ENCODE measurements at regions of chr5 and their contacts with region 1.

Region 1: GRCh38 chr5:43389679-43390329 is 22.4 kb downstream of the CCL28 start:
- DNase-seq: peak; percentile 81
- H3K4me3 ChIP-seq: no peak overlapping the region
- H3K27ac ChIP-seq: no peak overlapping the region
- H3K4me1 ChIP-seq: no peaks in the 10 kb centered on the region
- H3K27me3 ChIP-seq: no peaks in the 10 kb centered on the region
- CTCF ChIP-seq: peak; percentile 72 to 73
- POLR2A ChIP-seq: no peak

Region 2: DNA sequence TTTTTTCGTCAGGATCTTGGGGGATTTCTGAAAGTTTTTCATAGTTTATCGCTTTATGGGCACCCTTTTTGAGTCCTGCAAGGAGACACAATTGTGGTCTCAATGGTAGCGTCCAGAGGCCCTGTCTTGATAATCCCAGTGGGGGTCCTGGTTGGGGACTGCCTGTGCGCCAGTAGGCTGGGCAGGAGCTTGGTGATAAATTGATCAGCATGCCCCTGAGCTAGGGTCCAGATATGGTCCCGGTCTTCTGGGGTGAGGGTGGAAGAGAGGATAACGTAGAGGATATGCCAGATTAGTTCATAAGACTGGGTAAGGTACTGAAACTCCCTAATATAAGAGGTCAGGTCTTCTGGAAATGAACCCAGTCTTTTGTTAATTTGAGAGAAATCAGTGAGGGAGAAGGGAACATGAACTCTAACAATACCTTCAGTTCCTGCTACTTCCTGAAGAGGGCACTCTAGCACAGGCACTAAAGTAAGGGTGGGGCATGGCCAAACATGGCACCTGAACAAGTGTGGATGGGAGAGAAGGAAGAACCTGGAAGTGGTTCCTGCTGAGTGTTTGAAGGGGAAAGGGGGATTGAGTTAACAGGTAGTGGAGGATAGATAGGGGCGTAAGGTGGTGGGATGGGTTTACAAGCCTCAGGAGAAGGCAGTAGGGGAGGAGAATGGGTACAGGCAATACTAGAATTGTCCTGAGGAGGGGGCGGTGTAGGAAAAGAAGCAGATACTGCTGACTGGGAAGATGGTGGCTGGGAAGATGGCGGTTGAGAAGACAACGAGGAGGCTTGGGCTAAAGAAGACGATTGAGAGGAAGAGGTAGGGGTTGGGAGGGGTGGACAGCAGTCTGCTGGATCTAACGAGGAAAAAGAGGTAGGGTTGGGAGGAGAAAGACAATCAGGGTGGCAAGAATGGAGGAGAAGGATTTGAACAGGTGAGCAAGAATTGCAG is 315.9 kb before region 1 on chr5:
- CTCF ChIA-PET with region 1: interaction called, 8 read pairs
- POLR2A ChIA-PET with region 1: no interaction called
- dilution Hi-C with region 1: no loop called
- intact Hi-C with region 1: loop called (anchors 1 kb)
- DNase-seq: peak; percentile 34
- H3K4me3 ChIP-seq: no peak overlapping the region
- H3K27ac ChIP-seq: no peak overlapping the region
- H3K4me1 ChIP-seq: peaks cover 13% of the 10 kb centered on the region
- H3K27me3 ChIP-seq: no peaks in the 10 kb centered on the region
- CTCF ChIP-seq: peak; percentile 46 to 54
- POLR2A ChIP-seq: no peak

Region 3: GRCh38 chr5:43227655-43228054 is 162.1 kb before region 1 on chr5:
- CTCF ChIA-PET with region 1: interaction called, 34 read pairs
- POLR2A ChIA-PET with region 1: no interaction called
- dilution Hi-C with region 1: no loop called
- intact Hi-C with region 1: loop called (anchors 1 kb)
- DNase-seq: peak; percentile 44
- H3K4me3 ChIP-seq: no peak overlapping the region
- H3K27ac ChIP-seq: no peak overlapping the region
- H3K4me1 ChIP-seq: no peaks in the 10 kb centered on the region
- H3K27me3 ChIP-seq: peaks cover 2% of the 10 kb centered on the region in 2 experiments
- CTCF ChIP-seq: peak; percentile 28 to 41
- POLR2A ChIP-seq: no peak

Region 4: GRCh38 chr5:43236653-43237355 is 153.0 kb before region 1 on chr5:
- CTCF ChIA-PET with region 1: interaction called, 34 read pairs
- POLR2A ChIA-PET with region 1: no interaction called
- dilution Hi-C with region 1: no loop called
- intact Hi-C with region 1: loop called (anchors 1 kb)
- DNase-seq: no peak
- H3K4me3 ChIP-seq: no peak overlapping the region
- H3K27ac ChIP-seq: no peak overlapping the region
- H3K4me1 ChIP-seq: no peaks in the 10 kb centered on the region
- H3K27me3 ChIP-seq: peaks cover 0 to 2% of the 10 kb centered on the region in 2 experiments
- CTCF ChIP-seq: no peak
- POLR2A ChIP-seq: no peak

Region 5: DNA sequence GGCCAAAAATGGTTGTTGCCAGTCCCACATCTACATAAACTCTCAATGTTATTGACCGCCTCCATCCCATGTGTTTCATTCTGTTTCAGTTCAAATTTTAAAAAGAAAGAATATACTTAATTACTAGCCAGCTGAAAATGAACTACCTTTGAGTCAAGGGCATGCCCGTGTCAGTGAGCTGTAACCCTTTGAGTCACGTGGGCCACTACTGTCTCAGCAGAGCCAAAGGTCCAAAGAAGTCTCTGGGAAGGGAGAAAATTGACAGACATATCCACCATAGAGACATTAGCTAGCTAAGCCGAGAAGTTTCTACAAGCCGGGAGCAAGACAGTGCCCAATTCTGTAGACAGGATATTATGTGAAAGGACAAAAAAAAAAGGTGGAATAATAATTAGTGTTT is 138.1 kb before region 1 on chr5:
- CTCF ChIA-PET with region 1: no interaction called
- POLR2A ChIA-PET with region 1: no interaction called
- dilution Hi-C with region 1: no loop called
- intact Hi-C with region 1: no loop called
- DNase-seq: no peak
- H3K4me3 ChIP-seq: no peak overlapping the region
- H3K27ac ChIP-seq: no peak overlapping the region
- H3K4me1 ChIP-seq: no peaks in the 10 kb centered on the region
- H3K27me3 ChIP-seq: peaks cover 7 to 9% of the 10 kb centered on the region in 2 experiments
- CTCF ChIP-seq: no peak
- POLR2A ChIP-seq: no peak

Region 6: GRCh38 chr5:43305948-43306565 is 83.7 kb before region 1 on chr5:
- CTCF ChIA-PET with region 1: interaction called, 20 read pairs
- POLR2A ChIA-PET with region 1: no interaction called
- dilution Hi-C with region 1: no loop called
- intact Hi-C with region 1: loop called (anchors 2 kb)
- DNase-seq: peak; percentile 71
- H3K4me3 ChIP-seq: no peak overlapping the region
- H3K27ac ChIP-seq: no peak overlapping the region
- H3K4me1 ChIP-seq: peaks cover 19% of the 10 kb centered on the region
- H3K27me3 ChIP-seq: no peaks in the 10 kb centered on the region
- CTCF ChIP-seq: peak; percentile 39 to 43
- POLR2A ChIP-seq: no peak

Region 7: GRCh38 chr5:43313035-43313853 is 76.6 kb before region 1 on chr5 and contains the start of gene HMGCS1:
- CTCF ChIA-PET with region 1: interaction called, 20 read pairs
- POLR2A ChIA-PET with region 1: no interaction called
- dilution Hi-C with region 1: no loop called
- intact Hi-C with region 1: no loop called
- DNase-seq: peak; percentile 100
- H3K4me3 ChIP-seq: peak within 1 kb of the TSS; percentile 73 to 91 (median 75)
- H3K27ac ChIP-seq: peak within 1 kb of the TSS; percentile 43
- H3K4me1 ChIP-seq: peaks cover 35% of the 10 kb centered on the region
- H3K27me3 ChIP-seq: no peaks in the 10 kb centered on the region
- CTCF ChIP-seq: peak in 1 of 2 donors; percentile 5
- POLR2A ChIP-seq: peak; percentile 57
- total RNA-seq, gene HMGCS1: 133 and 149 TPM in 2 replicates

Region 8: DNA sequence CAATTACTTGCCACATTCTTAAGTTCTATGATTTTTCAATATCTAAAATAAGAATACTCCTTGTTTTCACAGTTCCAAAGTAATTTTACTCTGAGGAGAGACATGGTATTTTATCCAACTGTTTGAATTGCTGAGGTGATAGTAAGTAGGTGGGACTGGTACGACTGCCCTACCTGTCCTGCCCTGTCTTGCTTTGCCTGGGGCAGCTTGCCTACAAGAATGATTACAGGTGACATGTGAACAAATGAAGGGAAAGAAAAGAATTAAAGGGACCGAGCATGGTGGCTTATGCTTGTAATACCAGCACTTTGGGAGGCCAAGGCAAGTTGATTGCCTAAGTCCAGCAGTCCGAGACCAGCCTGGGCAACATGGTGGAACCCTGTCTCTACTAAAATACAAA is 35.0 kb before region 1 on chr5:
- CTCF ChIA-PET with region 1: no interaction called
- POLR2A ChIA-PET with region 1: no interaction called
- dilution Hi-C with region 1: no loop called
- intact Hi-C with region 1: no loop called
- DNase-seq: no peak
- H3K4me3 ChIP-seq: no peak overlapping the region
- H3K27ac ChIP-seq: no peak overlapping the region
- H3K4me1 ChIP-seq: no peaks in the 10 kb centered on the region
- H3K27me3 ChIP-seq: peaks cover 0 to 4% of the 10 kb centered on the region in 2 experiments
- CTCF ChIP-seq: no peak
- POLR2A ChIP-seq: no peak

Measured in endothelial cell of umbilical vein (primary cell).